ENCODE measurements at regions of chr14 and their contacts with region 1.

Region 1: GRCh38 chr14:60691383-60692113 is 32.6 kb downstream of the SIX4 start:
- DNase-seq: no peak
- ATAC-seq: no peak
- H3K4me3 ChIP-seq: no peak overlapping the region
- H3K4me3 Mint-ChIP-seq: no peak overlapping the region
- H3K27ac ChIP-seq: no peak overlapping the region
- H3K27ac Mint-ChIP-seq: no peak overlapping the region
- H3K4me1 ChIP-seq: no peaks in the 10 kb centered on the region
- H3K4me1 Mint-ChIP-seq: no peaks in the 10 kb centered on the region
- H3K27me3 ChIP-seq: peaks cover 0 to 2% of the 10 kb centered on the region in 2 experiments
- H3K27me3 Mint-ChIP-seq: peaks cover 9 to 11% of the 10 kb centered on the region in 2 donors

Region 2: GRCh38 chr14:60705100-60705499 is 13.6 kb after region 1 on chr14:
- CTCF ChIA-PET with region 1: interaction called in 1 of 2 experiments, 28 read pairs
- POLR2A ChIA-PET with region 1: no interaction called
- DNase-seq: no peak
- ATAC-seq: no peak
- H3K4me3 ChIP-seq: no peak overlapping the region
- H3K4me3 Mint-ChIP-seq: no peak overlapping the region
- H3K27ac ChIP-seq: no peak overlapping the region
- H3K27ac Mint-ChIP-seq: no peak overlapping the region
- H3K4me1 ChIP-seq: no peaks in the 10 kb centered on the region
- H3K4me1 Mint-ChIP-seq: no peaks in the 10 kb centered on the region
- H3K27me3 ChIP-seq: peaks cover 2 to 12% of the 10 kb centered on the region in 2 experiments
- H3K27me3 Mint-ChIP-seq: peaks cover 8 to 31% of the 10 kb centered on the region in 2 donors